Dorsolateral prefrontal cortex (tissue), 120 donors: ENCODE measurements at regions of chr16 and their contacts with region 1.

Region 1: DNA sequence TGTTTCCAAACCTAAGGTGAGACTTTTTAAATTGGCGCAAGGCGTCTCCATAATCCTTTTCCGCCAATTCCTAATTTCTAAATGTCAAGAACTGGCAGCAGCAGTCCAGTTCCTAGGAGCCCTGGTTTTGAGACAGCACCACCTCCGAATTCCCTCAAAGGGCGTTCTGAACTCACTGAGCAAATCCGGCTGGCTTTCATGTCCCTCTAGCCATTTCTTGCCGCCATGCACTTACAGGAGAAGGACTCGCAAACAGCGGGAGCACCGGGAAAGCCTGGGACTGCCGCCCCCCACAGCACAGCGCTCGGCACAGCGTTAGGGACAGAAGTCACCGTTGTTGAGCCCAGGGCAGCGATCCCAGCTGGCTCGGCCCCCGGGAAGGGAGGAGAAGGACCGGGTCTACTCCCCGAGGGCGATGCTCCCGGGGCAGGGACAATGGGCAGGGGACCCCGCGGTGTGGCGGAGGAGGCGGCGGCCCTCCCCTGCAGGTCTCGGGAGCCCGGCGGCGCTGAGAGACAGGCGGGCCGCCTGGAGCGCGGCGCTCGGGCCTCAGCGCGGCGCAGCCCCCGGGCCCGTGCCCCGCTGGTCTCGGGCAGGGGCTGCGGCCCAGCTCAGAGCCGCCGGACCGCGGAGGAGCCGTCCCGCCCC is 545 bp downstream of the ARHGAP17 start:
- DNase-seq: peak; percentile 46 to 82 (median 74)
- H3K4me3 ChIP-seq: peak overlapping the region; percentile 49 to 94 (median 81)
- H3K27ac ChIP-seq: peak overlapping the region; percentile 67 to 98 (median 94)
- H3K27me3 ChIP-seq: no peaks in the 10 kb centered on the region
- CTCF ChIP-seq: peak in 22 of 56 donors; percentile 6 to 32 (median 17)

Region 2: DNA sequence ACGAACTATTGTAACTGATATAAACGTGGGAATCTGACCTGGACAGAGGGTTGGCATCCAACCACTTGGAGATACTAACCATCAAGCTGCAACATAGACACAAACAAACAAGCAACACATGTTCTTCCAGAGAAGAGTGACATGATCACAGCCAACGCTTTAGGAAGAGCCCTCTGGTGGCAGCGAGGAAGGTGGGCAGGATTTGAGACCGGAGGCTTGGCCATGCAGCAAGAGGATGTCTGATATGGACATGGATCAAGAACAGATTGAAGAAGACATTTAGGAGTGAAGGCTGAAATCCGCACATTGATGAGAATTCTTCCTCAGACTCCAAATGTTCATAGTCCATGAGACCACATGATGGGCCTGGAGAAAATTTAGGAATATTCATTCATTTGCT is 325.5 kb before region 1 on chr16:
- intact Hi-C with region 1: no loop called
- DNase-seq: peak in 2 of 10 donors; percentile 22 to 68
- H3K4me3 ChIP-seq: no peak overlapping the region
- H3K27ac ChIP-seq: peak overlapping the region in 7 of 59 donors; percentile 0 to 59 (median 12)
- H3K27me3 ChIP-seq: no peaks in the 10 kb centered on the region
- CTCF ChIP-seq: peak in 53 of 56 donors; percentile 21 to 69 (median 53)

Region 3: GRCh38 chr16:24844101-24845030 is 170.3 kb before region 1 on chr16:
- intact Hi-C with region 1: loop called in 1 of 2 experiments (anchors 5 kb)
- DNase-seq: peak in 1 of 10 donors; percentile 30
- H3K4me3 ChIP-seq: no peak overlapping the region
- H3K27ac ChIP-seq: peak overlapping the region in 48 of 59 donors; percentile 30 to 99 (median 90)
- H3K27me3 ChIP-seq: no peaks in the 10 kb centered on the region
- CTCF ChIP-seq: no peak

Region 4: GRCh38 chr16:24988593-24989338 is 25.9 kb before region 1 on chr16:
- intact Hi-C with region 1: loop called in 1 of 2 experiments (anchors 2 kb)
- DNase-seq: peak in 2 of 10 donors; percentile 57 to 63
- H3K4me3 ChIP-seq: peak overlapping the region in 31 of 59 donors; percentile 1 to 47 (median 24)
- H3K27ac ChIP-seq: peak overlapping the region in 58 of 59 donors; percentile 1 to 97 (median 86)
- H3K27me3 ChIP-seq: no peaks in the 10 kb centered on the region
- CTCF ChIP-seq: peak in 3 of 56 donors; percentile 5 to 15 (median 5)